ENCODE measurements at regions of chr1 and their contacts with region 1.

Region 1: GRCh38 chr1:57546549-57547330 is 122.9 kb upstream of the DAB1 start:
- DNase-seq: no peak

Region 2: DNA sequence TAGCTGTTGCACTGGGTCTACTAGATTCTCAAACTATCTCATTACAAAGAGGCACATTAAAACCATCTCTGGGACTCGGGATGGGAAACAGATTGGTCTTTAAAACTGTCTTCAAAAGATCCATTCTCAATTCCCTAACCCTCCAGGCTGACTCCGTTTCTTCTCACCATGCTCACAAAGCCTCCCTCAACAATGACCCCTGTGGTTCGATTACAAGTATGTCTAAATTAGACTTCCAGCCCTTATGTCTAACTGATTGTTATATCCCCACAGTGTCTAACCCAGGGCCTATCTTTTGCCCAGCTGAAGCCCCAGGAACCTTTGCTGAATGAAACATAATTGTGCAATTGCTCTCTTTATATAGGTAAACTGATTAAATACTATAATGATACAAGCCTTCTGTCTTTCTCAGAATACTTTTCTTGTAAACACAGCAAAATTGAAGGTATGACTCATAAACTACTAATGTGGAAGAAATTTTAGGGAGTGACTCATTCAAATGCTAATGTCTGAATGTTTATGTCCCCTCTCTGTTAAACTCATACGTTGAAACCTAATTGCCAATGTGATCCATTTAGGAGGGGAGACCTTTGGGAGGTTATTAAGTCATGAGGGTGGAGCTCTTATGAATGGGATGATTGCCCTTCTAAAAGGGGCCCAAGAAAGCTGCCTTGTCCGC is 57.2 kb before region 1 on chr1:
- intact Hi-C with region 1: no loop called
- DNase-seq: no peak

Region 3: DNA sequence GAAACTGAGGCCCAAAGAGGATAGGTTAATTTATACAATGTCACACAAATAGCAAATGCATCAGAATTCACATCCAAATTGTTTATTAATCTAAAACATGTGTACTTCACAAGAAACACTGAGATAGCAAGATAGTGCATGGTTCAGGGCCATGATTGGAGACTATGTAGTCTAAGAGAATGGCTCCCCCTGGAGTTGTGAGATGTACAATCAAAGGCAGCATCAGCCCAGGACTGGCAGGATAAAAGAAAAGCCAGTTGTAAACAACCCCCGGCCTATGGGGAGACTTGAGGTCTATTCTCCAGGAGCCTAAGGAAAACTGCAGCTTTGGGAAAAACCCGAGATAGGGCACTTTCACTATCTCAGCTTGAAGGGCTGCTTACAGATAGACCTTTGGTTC is 488.8 kb after region 1 on chr1:
- intact Hi-C with region 1: loop called in 1 of 2 experiments (anchors 10 kb)
- DNase-seq: no peak

Measured in posterior vena cava (tissue), 2 donors.